ENCODE measurements at regions of chr4 and their contacts with region 1.

Region 1: DNA sequence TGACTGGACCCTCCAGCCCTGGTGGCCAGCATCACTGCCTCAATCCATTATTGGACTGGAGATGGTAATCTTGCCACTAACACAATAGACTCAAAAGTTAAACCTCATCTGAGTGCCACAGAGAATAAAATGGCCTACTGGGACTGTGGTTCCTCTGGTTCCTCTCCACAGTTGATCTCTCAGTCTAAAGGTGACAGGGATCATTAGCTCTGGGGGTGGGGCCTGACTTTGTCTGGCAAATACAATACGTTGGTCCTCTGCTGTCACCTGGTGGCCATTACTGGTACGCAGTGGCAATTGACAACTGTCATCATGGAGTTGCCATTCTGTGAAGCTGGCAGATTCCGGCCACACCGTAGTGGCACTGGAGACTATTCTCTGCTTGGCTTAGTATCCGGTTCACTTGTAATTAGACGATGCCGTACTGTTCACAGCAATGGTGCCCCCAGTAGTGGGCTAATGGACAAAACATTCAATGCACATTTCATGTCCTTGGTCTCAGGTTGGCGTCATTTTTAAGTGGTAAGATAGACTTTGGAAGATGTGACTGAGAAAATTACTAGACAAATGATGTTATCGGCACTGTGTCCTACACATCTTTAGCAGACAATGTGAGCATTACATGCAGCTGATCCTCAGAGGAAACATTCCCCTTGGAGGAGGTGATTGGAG is 6.7 kb downstream of the FGFBP2 start:
- DNase-seq: peak; percentile 51 to 83 (median 70)
- ATAC-seq: peak; percentile 96
- H3K4me3 ChIP-seq: no peak overlapping the region
- H3K4me3 Mint-ChIP-seq: no peak overlapping the region
- H3K27ac ChIP-seq: no peak overlapping the region
- H3K27ac Mint-ChIP-seq: no peak overlapping the region
- H3K4me1 ChIP-seq: no peaks in the 10 kb centered on the region
- H3K4me1 Mint-ChIP-seq: no peaks in the 10 kb centered on the region
- H3K27me3 ChIP-seq: no peaks in the 10 kb centered on the region
- H3K27me3 Mint-ChIP-seq: no peaks in the 10 kb centered on the region
- CTCF ChIP-seq: peak; percentile 78

Region 2: DNA sequence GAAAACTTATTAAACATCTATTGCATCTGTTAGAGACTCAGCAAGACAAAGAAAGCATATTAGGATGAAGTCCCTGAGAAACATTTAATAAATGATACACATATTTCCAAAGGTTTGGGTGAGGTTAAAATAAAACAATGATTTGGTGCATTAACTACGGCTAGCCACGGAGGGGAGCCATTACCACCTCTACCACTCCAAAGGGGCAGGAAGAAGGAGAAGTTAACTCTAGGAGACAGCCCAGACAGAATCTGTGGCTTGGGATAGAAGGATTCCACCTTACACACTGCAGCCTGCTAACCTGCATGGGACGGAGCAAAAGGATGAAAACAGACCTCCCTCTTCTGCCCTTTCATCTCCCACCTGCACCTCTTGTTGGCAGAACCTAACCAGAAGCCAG is 717.6 kb before region 1 on chr4:
- CTCF ChIA-PET with region 1: no interaction called
- POLR2A ChIA-PET with region 1: no interaction called
- intact Hi-C with region 1: loop called (anchors 2 to 5 kb)
- DNase-seq: peak in 6 of 14 experiments; percentile 5 to 56 (median 38)
- ATAC-seq: peak; percentile 52
- H3K4me3 ChIP-seq: no peak overlapping the region
- H3K4me3 Mint-ChIP-seq: no peak overlapping the region
- H3K27ac ChIP-seq: no peak overlapping the region
- H3K27ac Mint-ChIP-seq: no peak overlapping the region
- H3K4me1 ChIP-seq: peaks cover 7% of the 10 kb centered on the region
- H3K4me1 Mint-ChIP-seq: peaks cover 13% of the 10 kb centered on the region
- H3K27me3 ChIP-seq: no peaks in the 10 kb centered on the region
- H3K27me3 Mint-ChIP-seq: no peaks in the 10 kb centered on the region
- CTCF ChIP-seq: peak; percentile 54

Region 3: GRCh38 chr4:15729910-15730533 is 226.3 kb before region 1 on chr4:
- CTCF ChIA-PET with region 1: no interaction called
- POLR2A ChIA-PET with region 1: no interaction called
- intact Hi-C with region 1: loop called (anchors 1 kb)
- DNase-seq: peak in 9 of 14 experiments; percentile 7 to 71 (median 12)
- ATAC-seq: peak; percentile 66
- H3K4me3 ChIP-seq: no peak overlapping the region
- H3K4me3 Mint-ChIP-seq: no peak overlapping the region
- H3K27ac ChIP-seq: no peak overlapping the region
- H3K27ac Mint-ChIP-seq: no peak overlapping the region
- H3K4me1 ChIP-seq: peaks cover 3% of the 10 kb centered on the region
- H3K4me1 Mint-ChIP-seq: peaks cover 14% of the 10 kb centered on the region
- H3K27me3 ChIP-seq: no peaks in the 10 kb centered on the region
- H3K27me3 Mint-ChIP-seq: no peaks in the 10 kb centered on the region
- CTCF ChIP-seq: peak; percentile 95

Region 4: DNA sequence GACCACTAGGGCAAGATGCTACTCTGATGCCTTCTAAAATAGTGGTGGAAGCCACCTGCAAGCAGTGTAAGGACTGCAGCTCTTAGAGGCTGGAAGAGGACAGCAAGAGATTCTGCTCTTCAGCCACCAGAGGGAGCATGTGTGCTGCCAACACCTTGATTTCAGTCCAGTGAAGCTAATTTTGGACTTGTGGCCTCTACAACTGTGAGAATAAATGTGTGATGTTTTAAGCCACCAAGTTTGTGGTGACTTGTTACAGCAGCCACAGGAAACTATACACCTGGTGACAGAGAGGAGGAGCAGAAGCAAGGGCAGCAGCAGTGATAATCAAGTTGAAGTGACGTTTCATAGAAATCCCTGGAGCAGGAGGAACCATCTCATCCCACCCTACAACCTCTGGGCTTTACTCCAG is 73.6 kb before region 1 on chr4:
- CTCF ChIA-PET with region 1: interaction called, 4 read pairs
- POLR2A ChIA-PET with region 1: no interaction called
- intact Hi-C with region 1: loop called (anchors 2 to 5 kb)
- DNase-seq: peak in 13 of 14 experiments; percentile 11 to 75 (median 22)
- ATAC-seq: peak; percentile 64
- H3K4me3 ChIP-seq: no peak overlapping the region
- H3K4me3 Mint-ChIP-seq: no peak overlapping the region
- H3K27ac ChIP-seq: no peak overlapping the region
- H3K27ac Mint-ChIP-seq: no peak overlapping the region
- H3K4me1 ChIP-seq: no peaks in the 10 kb centered on the region
- H3K4me1 Mint-ChIP-seq: no peaks in the 10 kb centered on the region
- H3K27me3 ChIP-seq: no peaks in the 10 kb centered on the region
- H3K27me3 Mint-ChIP-seq: peaks cover 4% of the 10 kb centered on the region
- CTCF ChIP-seq: peak; percentile 76

Region 5: GRCh38 chr4:15920723-15921591 is 35.4 kb before region 1 on chr4:
- CTCF ChIA-PET with region 1: no interaction called
- POLR2A ChIA-PET with region 1: no interaction called
- intact Hi-C with region 1: no loop called
- DNase-seq: no peak
- ATAC-seq: no peak
- H3K4me3 ChIP-seq: no peak overlapping the region
- H3K4me3 Mint-ChIP-seq: no peak overlapping the region
- H3K27ac ChIP-seq: no peak overlapping the region
- H3K27ac Mint-ChIP-seq: no peak overlapping the region
- H3K4me1 ChIP-seq: no peaks in the 10 kb centered on the region
- H3K4me1 Mint-ChIP-seq: no peaks in the 10 kb centered on the region
- H3K27me3 ChIP-seq: peaks cover 0 to 9% of the 10 kb centered on the region in 2 experiments
- H3K27me3 Mint-ChIP-seq: peaks cover 15% of the 10 kb centered on the region
- CTCF ChIP-seq: no peak

Region 6: DNA sequence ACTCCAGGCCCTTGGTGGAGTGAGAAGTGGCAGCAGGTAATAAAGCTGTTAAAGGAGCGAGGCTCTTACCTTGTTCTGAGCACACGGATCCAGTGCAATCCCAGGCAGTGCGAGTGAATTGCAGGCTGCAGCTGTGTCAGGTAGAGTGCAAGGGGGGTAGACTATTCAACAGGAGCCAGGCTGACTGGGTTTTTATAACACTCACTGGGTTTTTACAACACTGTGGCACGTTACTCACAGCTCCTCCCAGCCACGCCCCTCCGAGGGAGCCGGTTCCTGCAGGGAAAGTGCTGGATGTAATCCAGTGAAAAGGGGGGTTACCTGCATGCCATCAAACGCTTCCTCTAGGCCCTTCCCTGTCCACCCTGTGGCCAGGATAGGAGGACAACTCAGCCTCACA is 18.1 kb before region 1 on chr4:
- CTCF ChIA-PET with region 1: no interaction called
- POLR2A ChIA-PET with region 1: no interaction called
- intact Hi-C with region 1: no loop called
- DNase-seq: no peak
- ATAC-seq: no peak
- H3K4me3 ChIP-seq: no peak overlapping the region
- H3K4me3 Mint-ChIP-seq: no peak overlapping the region
- H3K27ac ChIP-seq: no peak overlapping the region
- H3K27ac Mint-ChIP-seq: no peak overlapping the region
- H3K4me1 ChIP-seq: no peaks in the 10 kb centered on the region
- H3K4me1 Mint-ChIP-seq: no peaks in the 10 kb centered on the region
- H3K27me3 ChIP-seq: no peaks in the 10 kb centered on the region
- H3K27me3 Mint-ChIP-seq: peaks cover 22% of the 10 kb centered on the region
- CTCF ChIP-seq: no peak

Measured in CD4-positive, alpha-beta T cell (primary cell).